ENCODE measurements at regions of chr2 and their contacts with region 1.

Region 1: GRCh38 chr2:225668606-225669266 is 269.2 kb downstream of the NYAP2 start:
- DNase-seq: peak; percentile 91
- H3K4me3 ChIP-seq: no peak overlapping the region
- H3K27ac ChIP-seq: peak overlapping the region; percentile 85
- H3K4me1 ChIP-seq: peaks cover 47% of the 10 kb centered on the region
- H3K27me3 ChIP-seq: no peaks in the 10 kb centered on the region
- CTCF ChIP-seq: peak; percentile 90

Region 2: DNA sequence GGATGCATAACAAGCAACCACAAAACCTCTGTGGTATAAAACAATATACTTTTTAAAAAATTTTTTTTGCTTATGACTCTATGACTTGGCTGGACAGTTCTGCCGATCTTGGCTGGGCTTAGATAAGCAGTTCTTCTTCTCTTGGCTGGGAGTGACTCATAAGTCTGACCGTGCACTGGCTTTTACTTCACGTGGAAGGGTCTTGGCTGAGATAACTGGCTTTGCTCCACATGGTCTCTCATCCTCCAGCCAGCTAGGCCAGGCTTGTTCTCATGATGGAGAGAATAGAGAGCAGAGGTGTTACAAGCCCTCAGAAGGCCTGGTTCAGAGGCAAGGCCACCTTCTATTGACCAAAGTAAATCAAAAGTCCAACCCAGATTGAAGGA is 1450.8 kb before region 1 on chr2:
- CTCF ChIA-PET with region 1: no interaction called
- POLR2A ChIA-PET with region 1: no interaction called
- intact Hi-C with region 1: no loop called
- DNase-seq: no peak
- H3K4me3 ChIP-seq: no peak overlapping the region
- H3K27ac ChIP-seq: no peak overlapping the region
- H3K4me1 ChIP-seq: peaks cover 35% of the 10 kb centered on the region
- H3K27me3 ChIP-seq: no peaks in the 10 kb centered on the region
- CTCF ChIP-seq: no peak

Region 3: GRCh38 chr2:225797394-225797793 is 128.7 kb after region 1 on chr2:
- CTCF ChIA-PET with region 1: interaction called, 3 read pairs
- POLR2A ChIA-PET with region 1: no interaction called
- intact Hi-C with region 1: loop called (anchors 1 kb)
- DNase-seq: no peak
- H3K4me3 ChIP-seq: no peak overlapping the region
- H3K27ac ChIP-seq: peak overlapping the region; percentile 31
- H3K4me1 ChIP-seq: peaks cover 38% of the 10 kb centered on the region
- H3K27me3 ChIP-seq: no peaks in the 10 kb centered on the region
- CTCF ChIP-seq: no peak

Region 4: DNA sequence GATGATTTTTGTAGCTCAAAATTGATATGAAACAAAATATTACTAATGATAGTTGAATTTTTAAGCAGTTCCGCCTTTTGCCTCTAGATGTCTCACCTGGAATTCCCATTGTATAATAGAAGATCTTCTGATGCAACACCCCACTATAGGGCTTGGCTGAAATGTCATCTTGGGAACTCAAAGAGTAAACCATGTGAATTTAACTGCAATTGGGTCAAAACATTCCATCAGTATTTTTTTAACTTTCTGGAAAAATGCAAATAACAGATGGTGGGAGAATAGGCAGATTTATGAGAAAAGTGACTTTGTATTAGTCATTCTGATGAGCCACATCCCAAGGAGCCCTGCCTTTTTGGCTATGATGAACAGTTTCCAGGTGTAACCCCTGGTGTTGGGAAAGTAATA is 220.7 kb after region 1 on chr2:
- CTCF ChIA-PET with region 1: interaction called, 6 read pairs
- POLR2A ChIA-PET with region 1: no interaction called
- intact Hi-C with region 1: loop called (anchors 5 kb)
- DNase-seq: peak; percentile 75
- H3K4me3 ChIP-seq: no peak overlapping the region
- H3K27ac ChIP-seq: no peak overlapping the region
- H3K4me1 ChIP-seq: peaks cover 7% of the 10 kb centered on the region
- H3K27me3 ChIP-seq: no peaks in the 10 kb centered on the region
- CTCF ChIP-seq: peak; percentile 82

Region 5: GRCh38 chr2:226118471-226119430 is 450.0 kb after region 1 on chr2:
- CTCF ChIA-PET with region 1: no interaction called
- POLR2A ChIA-PET with region 1: no interaction called
- intact Hi-C with region 1: loop called (anchors 2 kb)
- DNase-seq: peak; percentile 92
- H3K4me3 ChIP-seq: peak overlapping the region; percentile 9
- H3K27ac ChIP-seq: peak overlapping the region; percentile 55
- H3K4me1 ChIP-seq: peaks cover 84% of the 10 kb centered on the region
- H3K27me3 ChIP-seq: no peaks in the 10 kb centered on the region
- CTCF ChIP-seq: no peak

Region 6: DNA sequence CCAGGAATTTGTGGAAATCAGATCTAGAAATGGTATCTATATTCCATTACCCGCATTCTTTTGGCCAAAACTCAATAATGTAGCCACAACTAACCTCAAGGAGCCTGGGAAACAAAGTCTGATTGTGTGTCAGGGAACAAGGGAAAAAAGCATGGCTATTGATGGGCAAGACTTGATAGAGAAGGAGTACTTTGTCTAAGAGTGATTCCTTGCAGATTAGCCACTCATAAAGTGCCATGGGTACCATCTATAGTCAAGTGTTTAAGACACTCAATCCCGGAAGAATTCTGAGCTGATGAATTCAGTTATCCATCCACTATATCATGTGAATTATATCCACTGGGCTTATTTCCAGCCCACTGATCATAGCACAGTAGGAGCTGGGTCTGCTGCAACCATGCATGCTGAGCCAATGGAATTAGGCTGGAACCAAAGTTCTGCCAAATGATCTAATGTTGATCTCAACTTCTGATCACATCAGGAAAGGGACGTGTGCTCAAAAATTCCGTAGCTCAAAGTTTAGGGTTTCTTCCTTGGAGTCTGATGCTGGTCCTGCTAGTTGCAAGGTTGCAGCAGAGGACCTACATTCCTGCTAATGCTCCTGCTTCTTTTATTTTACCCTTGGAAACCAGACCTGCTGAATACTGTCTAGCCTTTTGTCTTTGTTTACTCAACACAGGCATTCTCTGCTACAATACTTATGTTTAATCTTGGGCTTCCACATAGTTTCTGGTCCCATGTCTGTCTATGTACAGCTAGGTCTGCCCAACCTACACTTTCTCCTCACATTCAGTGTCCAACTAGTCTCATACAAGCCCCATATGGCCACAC is 501.2 kb after region 1 on chr2:
- CTCF ChIA-PET with region 1: no interaction called
- POLR2A ChIA-PET with region 1: no interaction called
- intact Hi-C with region 1: no loop called
- DNase-seq: no peak
- H3K4me3 ChIP-seq: no peak overlapping the region
- H3K27ac ChIP-seq: no peak overlapping the region
- H3K4me1 ChIP-seq: no peaks in the 10 kb centered on the region
- H3K27me3 ChIP-seq: no peaks in the 10 kb centered on the region
- CTCF ChIP-seq: no peak

Region 7: GRCh38 chr2:226649871-226650660 is 981.3 kb after region 1 on chr2:
- CTCF ChIA-PET with region 1: no interaction called
- POLR2A ChIA-PET with region 1: no interaction called
- intact Hi-C with region 1: loop called (anchors 10 kb)
- DNase-seq: peak; percentile 99
- H3K4me3 ChIP-seq: peak overlapping the region; percentile 1
- H3K27ac ChIP-seq: peak overlapping the region; percentile 79
- H3K4me1 ChIP-seq: peaks cover 45% of the 10 kb centered on the region
- H3K27me3 ChIP-seq: no peaks in the 10 kb centered on the region
- CTCF ChIP-seq: no peak

Region 8: DNA sequence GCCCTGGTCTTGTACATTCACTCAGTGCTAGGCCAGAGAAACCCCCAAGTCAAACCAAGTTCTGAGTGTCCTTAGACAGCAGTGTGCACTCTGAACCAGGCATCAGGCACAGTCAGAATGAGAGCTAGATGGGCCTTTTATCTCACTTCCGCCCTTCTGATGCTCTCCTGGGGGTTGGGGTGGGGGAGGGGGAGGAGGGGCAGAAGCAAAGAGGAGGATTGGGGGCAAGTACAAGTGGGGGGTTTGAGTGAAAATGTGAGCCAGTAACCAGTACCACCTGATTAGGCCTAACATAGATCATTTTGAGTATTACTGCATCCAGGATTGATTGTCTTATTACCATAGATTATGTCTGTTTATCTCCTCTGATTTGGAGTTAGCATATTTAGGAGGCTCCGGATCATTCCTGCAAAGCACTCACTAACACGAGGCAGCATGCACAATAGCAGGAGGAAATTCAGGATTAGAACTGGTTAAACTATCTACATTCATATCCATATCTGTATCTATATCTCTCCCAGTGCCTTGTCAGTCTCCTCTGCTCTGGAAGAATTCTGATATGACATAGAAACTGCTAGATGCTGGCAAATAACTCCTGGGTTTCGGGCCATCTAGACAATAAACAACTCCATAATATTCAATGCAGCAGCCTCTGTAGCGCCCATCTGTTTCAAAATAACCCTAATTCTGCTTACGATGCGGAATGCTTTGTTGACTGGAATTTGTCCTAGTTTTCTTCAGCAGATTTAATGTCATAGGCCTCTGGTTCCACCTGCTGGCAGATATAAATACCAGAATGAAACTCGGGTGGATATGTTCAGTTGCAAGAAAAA is 1316.2 kb after region 1 on chr2:
- CTCF ChIA-PET with region 1: interaction called, 16 read pairs
- POLR2A ChIA-PET with region 1: no interaction called
- intact Hi-C with region 1: loop called (anchors 1 kb)
- DNase-seq: peak; percentile 88
- H3K4me3 ChIP-seq: no peak overlapping the region
- H3K27ac ChIP-seq: peak overlapping the region; percentile 52
- H3K4me1 ChIP-seq: peaks cover 14% of the 10 kb centered on the region
- H3K27me3 ChIP-seq: no peaks in the 10 kb centered on the region
- CTCF ChIP-seq: peak; percentile 77

Region 9: GRCh38 chr2:227106845-227107759 is 1438.4 kb after region 1 on chr2:
- CTCF ChIA-PET with region 1: interaction called, 4 read pairs
- POLR2A ChIA-PET with region 1: no interaction called
- intact Hi-C with region 1: loop called (anchors 1 kb)
- DNase-seq: peak; percentile 81
- H3K4me3 ChIP-seq: no peak overlapping the region
- H3K27ac ChIP-seq: no peak overlapping the region
- H3K4me1 ChIP-seq: no peaks in the 10 kb centered on the region
- H3K27me3 ChIP-seq: no peaks in the 10 kb centered on the region
- CTCF ChIP-seq: peak; percentile 87